Posterior cingulate gyrus (tissue), 11 donors: ENCODE measurements at regions of chr1 and their contacts with region 1.

Region 1: GRCh38 chr1:21594935-21595897 is 73.9 kb downstream of the RAP1GAP start:
- DNase-seq: peak in 7 of 10 donors; percentile 55 to 94 (median 73)

Region 2: GRCh38 chr1:21457654-21458053 is 137.6 kb before region 1 on chr1:
- intact Hi-C with region 1: no loop called
- DNase-seq: no peak

Region 3: GRCh38 chr1:21508580-21509350 is 86.5 kb before region 1 on chr1:
- intact Hi-C with region 1: loop called (anchors 5 kb)
- DNase-seq: peak in 7 of 10 donors; percentile 34 to 91 (median 51)

Region 4: GRCh38 chr1:21573971-21574465 is 21.2 kb before region 1 on chr1:
- intact Hi-C with region 1: no loop called
- DNase-seq: peak in 9 of 10 donors; percentile 36 to 93 (median 69)